ENCODE measurements at regions of chr4 and their contacts with region 1.

Region 1: GRCh38 chr4:47463235-47463956 is at the start of gene COMMD8:
- DNase-seq: peak; percentile 98
- ATAC-seq: peak; percentile 96
- H3K4me3 Mint-ChIP-seq: peak within 1 kb of the TSS; percentile 85
- H3K27ac Mint-ChIP-seq: peak within 1 kb of the TSS; percentile 78
- H3K4me1 Mint-ChIP-seq: peaks cover 30% of the 10 kb centered on the region
- H3K27me3 Mint-ChIP-seq: no peaks in the 10 kb centered on the region
- total RNA-seq, gene COMMD8: 23.6 to 27.9 TPM

Region 2: DNA sequence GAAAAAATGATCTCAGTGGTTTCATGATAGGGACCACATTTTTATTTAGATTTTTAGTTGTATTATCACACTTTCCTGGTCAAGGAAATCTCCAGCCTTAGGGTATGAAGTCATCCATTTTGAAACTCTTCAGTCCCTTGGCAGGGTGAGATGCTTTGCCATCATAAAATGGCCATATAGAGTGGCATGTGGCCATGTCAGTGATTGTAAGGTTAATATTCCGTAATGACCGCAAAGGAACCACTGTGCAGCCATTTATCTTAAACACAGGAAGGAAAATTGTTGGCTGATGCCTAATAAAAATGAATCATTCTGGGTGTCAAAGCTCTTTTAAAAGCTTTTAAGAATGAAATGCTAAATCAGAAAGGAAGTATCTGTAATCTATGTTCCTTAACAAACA is 35.5 kb before region 1 on chr4:
- CTCF ChIA-PET with region 1: no interaction called
- DNase-seq: no peak
- ATAC-seq: no peak
- H3K4me3 Mint-ChIP-seq: no peak overlapping the region
- H3K27ac Mint-ChIP-seq: no peak overlapping the region
- H3K4me1 Mint-ChIP-seq: no peaks in the 10 kb centered on the region
- H3K27me3 Mint-ChIP-seq: peaks cover 9% of the 10 kb centered on the region

Region 3: GRCh38 chr4:47485047-47485692 is 21.8 kb after region 1 on chr4 and contains the start of gene ATP10D:
- CTCF ChIA-PET with region 1: interaction called, 16 read pairs
- DNase-seq: peak; percentile 90
- ATAC-seq: peak; percentile 99
- H3K4me3 Mint-ChIP-seq: peak within 1 kb of the TSS; percentile 98
- H3K27ac Mint-ChIP-seq: peak within 1 kb of the TSS; percentile 95
- H3K4me1 Mint-ChIP-seq: peaks cover 28% of the 10 kb centered on the region
- H3K27me3 Mint-ChIP-seq: no peaks in the 10 kb centered on the region
- total RNA-seq, gene ATP10D: 18.9 to 25.9 TPM

Measured in activated CD8-positive, alpha-beta memory T cell treated with anti-CD3 and anti-CD28 coated beads, Interleukin-2, amount 10 ng/mL, durations not matched to agents 7 days and 5 days (primary cell).